ENCODE measurements at regions of chr10 and their contacts with region 1.

Region 1: GRCh38 chr10:133139551-133140065 is 20.4 kb upstream of the KNDC1 start:
- DNase-seq: no peak
- ATAC-seq: no peak
- H3K4me3 Mint-ChIP-seq: no peak overlapping the region
- H3K27ac Mint-ChIP-seq: no peak overlapping the region
- H3K4me1 Mint-ChIP-seq: peaks cover 13% of the 10 kb centered on the region
- H3K27me3 Mint-ChIP-seq: peaks cover 6% of the 10 kb centered on the region
- CTCF ChIP-seq: no peak

Region 2: GRCh38 chr10:132836832-132837540 is 302.6 kb before region 1 on chr10:
- CTCF ChIA-PET with region 1: interaction called, 3 read pairs
- POLR2A ChIA-PET with region 1: no interaction called
- intact Hi-C with region 1: loop called (anchors 10 kb)
- DNase-seq: peak; percentile 54
- ATAC-seq: peak; percentile 52
- H3K4me3 Mint-ChIP-seq: no peak overlapping the region
- H3K27ac Mint-ChIP-seq: no peak overlapping the region
- H3K4me1 Mint-ChIP-seq: peaks cover 6% of the 10 kb centered on the region
- H3K27me3 Mint-ChIP-seq: peaks cover 5% of the 10 kb centered on the region
- CTCF ChIP-seq: peak; percentile 78

Region 3: DNA sequence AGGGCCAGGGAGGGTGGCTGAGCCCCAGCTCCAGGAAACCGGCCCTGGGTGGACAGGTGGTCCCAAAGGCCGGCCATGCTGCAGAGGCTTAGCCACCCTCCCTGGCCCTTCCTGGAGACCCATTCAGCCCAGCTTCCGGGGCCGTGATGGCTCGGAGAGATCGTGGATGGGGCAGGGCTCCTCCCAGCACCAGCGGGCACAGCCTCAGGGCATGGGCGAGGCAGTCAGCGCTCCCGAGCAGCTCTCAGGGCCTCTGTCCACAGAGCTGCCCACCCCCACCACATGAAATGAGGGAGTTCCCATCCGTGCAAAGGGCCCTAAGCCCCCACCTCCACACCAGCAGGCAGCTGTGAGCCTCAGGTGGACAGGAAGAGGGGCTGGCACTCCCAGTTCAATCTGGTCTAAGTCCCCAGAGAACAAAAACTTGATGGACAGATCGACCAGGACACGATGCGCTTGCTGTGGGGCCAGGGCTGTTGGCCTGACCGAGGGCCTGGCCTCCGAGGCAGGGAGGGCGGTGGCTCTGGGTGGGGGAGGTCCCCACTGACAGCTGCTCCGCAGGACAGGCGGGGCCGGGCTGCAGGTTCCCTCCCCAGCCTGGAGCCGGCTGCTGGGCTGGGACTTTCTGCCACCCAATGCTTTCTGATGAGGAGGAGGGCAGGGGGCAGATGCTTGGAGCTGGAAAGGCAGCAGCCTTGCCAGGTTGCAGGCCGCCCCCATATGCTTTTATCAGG is 89.4 kb before region 1 on chr10:
- CTCF ChIA-PET with region 1: no interaction called
- POLR2A ChIA-PET with region 1: no interaction called
- intact Hi-C with region 1: no loop called
- DNase-seq: no peak
- ATAC-seq: no peak
- H3K4me3 Mint-ChIP-seq: no peak overlapping the region
- H3K27ac Mint-ChIP-seq: no peak overlapping the region
- H3K4me1 Mint-ChIP-seq: no peaks in the 10 kb centered on the region
- H3K27me3 Mint-ChIP-seq: no peaks in the 10 kb centered on the region
- CTCF ChIP-seq: no peak

Region 4: DNA sequence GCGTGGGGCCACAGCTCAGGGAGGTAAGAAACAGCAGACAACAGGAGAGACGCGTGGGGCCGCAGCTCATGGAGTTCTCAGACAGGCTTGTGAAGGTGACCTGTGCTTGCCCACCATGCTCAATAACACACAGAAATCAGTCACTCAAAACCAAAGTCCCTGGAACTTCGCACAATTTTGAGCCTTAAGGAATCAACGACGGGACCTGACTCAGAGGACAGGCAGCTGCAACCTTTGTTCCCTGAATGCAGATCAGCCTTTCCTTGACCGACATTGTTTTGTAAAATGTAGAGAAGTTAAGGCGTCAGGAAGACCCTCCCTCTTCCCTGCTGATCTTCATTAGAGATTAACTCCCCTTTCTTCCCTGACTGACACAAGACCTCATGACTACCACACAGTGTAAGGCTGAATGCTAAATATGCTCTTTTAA is 11.9 kb after region 1 on chr10:
- CTCF ChIA-PET with region 1: no interaction called
- POLR2A ChIA-PET with region 1: no interaction called
- intact Hi-C with region 1: no loop called
- DNase-seq: no peak
- ATAC-seq: no peak
- H3K4me3 Mint-ChIP-seq: no peak overlapping the region
- H3K27ac Mint-ChIP-seq: no peak overlapping the region
- H3K4me1 Mint-ChIP-seq: no peaks in the 10 kb centered on the region
- H3K27me3 Mint-ChIP-seq: peaks cover 32% of the 10 kb centered on the region
- CTCF ChIP-seq: no peak

Measured in activated B cell treated with CpG ODN at 0.5 μM for 24 hours (primary cell).